Dendritic cell treated with granulocyte-macrophage colony-stimulating factor and Interleukin-4, amounts not matched to agents 40 ng/mL and 50 ng/mL, for 4 days (primary cell): ENCODE measurements at regions of chr19 and their contacts with region 1.

Region 1: DNA sequence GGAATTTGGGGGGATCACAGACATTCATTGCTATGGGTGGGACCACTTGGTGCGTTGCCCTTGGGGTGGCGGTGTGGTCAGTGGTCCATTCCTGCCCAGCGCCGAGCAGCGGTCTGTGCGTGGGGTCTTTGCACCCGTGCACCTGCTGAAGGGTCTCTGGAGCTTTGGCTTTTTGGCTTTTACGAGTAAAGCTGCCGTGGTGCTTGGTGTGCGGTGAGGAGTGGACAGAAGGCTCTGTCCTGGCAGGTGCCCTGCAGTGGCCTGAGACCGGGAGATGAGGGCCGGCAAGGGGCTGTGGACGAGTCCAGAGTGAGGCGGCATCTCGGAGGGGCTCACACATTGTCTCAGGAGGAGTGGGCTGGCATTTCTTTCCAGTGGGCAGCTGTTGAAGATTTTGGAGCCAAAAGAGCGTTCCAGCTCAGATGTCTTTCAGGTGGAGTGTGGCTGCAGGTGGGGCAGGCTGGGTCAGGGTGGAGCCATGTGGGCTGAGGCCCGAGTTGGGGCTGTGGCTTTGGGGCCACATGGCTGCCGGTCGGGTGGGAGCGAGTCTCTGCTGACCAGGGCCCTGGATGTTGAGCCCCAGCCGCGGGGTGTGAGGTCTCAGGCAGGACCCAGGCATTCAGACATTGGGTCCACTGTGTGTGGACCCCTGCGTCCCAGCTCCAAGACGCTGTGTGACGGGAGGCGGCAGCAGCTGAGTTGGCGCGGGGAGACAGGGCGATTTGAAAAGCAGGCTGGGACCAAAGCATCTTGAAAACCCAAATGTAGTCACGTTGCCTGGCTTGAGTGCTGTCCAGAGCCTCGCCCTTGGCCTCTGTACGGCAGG is 11.7 kb downstream of the GNA11 start:
- H3K4me3 Mint-ChIP-seq: no peak overlapping the region
- H3K27ac Mint-ChIP-seq: no peak overlapping the region
- H3K4me1 Mint-ChIP-seq: peaks cover 26% of the 10 kb centered on the region
- H3K27me3 Mint-ChIP-seq: peaks cover 45% of the 10 kb centered on the region

Region 2: DNA sequence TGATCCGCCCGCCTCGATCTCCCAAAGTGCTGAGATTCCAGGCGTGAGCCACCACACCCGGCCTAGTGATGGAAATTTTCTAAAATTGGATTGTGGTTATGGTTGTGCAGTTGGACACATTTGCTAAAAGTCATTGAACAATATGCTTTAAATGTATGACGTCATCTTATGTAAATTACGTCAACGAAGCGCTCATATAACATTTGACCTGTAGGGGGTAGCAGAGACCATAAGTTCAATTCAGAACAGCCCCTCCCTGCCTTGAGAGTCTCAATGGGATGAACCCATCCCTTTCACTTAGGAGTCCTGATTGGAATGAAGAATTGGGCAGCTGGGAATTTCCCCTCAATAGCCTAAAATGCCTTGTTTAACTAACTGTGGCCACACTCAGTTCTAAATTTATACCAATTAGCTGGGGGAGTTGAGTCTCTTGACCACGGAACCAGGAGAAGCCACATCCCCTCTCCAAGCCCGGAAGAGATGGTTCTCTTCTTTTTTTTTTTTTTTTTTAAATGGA is 143.8 kb before region 1 on chr19:
- intact Hi-C with region 1: loop called (anchors 1 kb)
- H3K4me3 Mint-ChIP-seq: no peak overlapping the region
- H3K27ac Mint-ChIP-seq: no peak overlapping the region
- H3K4me1 Mint-ChIP-seq: no peaks in the 10 kb centered on the region
- H3K27me3 Mint-ChIP-seq: peaks cover 11% of the 10 kb centered on the region

Region 3: DNA sequence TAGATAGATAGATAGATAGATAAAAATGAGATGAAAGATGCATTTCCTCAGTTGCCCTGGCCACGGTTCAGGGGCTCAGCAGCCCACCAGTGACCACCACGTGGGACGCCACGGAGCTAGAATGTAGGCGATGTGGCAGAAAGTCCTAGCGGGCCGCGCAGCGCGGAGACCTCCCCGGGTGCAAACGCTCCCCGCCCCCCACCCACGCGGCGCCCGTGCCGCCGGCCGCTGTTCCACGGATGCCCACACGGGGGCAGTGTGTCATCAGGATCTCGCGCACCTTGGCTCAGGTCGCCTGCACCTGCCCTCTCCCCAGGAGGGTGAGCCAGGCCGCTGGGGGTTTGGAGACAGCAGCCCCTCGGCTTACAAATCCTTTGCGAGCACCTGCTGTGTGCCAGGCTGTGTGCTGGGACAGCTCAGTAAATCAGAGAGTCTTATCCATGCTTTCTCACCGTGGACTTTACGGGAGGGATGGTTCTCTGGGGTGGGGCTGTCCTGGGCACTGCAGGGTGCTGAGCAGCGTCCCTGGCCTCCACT is 29.9 kb before region 1 on chr19:
- intact Hi-C with region 1: loop called (anchors 2 kb)
- H3K4me3 Mint-ChIP-seq: no peak overlapping the region
- H3K27ac Mint-ChIP-seq: no peak overlapping the region
- H3K4me1 Mint-ChIP-seq: peaks cover 18% of the 10 kb centered on the region
- H3K27me3 Mint-ChIP-seq: peaks cover 32% of the 10 kb centered on the region

Region 4: GRCh38 chr19:3343619-3344502 is 238.0 kb after region 1 on chr19:
- intact Hi-C with region 1: no loop called
- H3K4me3 Mint-ChIP-seq: peak overlapping the region; percentile 58
- H3K27ac Mint-ChIP-seq: peak overlapping the region; percentile 30
- H3K4me1 Mint-ChIP-seq: peaks cover 7% of the 10 kb centered on the region
- H3K27me3 Mint-ChIP-seq: peaks cover 12% of the 10 kb centered on the region